ENCODE measurements at regions of chr2 and their contacts with region 1.

Region 1: DNA sequence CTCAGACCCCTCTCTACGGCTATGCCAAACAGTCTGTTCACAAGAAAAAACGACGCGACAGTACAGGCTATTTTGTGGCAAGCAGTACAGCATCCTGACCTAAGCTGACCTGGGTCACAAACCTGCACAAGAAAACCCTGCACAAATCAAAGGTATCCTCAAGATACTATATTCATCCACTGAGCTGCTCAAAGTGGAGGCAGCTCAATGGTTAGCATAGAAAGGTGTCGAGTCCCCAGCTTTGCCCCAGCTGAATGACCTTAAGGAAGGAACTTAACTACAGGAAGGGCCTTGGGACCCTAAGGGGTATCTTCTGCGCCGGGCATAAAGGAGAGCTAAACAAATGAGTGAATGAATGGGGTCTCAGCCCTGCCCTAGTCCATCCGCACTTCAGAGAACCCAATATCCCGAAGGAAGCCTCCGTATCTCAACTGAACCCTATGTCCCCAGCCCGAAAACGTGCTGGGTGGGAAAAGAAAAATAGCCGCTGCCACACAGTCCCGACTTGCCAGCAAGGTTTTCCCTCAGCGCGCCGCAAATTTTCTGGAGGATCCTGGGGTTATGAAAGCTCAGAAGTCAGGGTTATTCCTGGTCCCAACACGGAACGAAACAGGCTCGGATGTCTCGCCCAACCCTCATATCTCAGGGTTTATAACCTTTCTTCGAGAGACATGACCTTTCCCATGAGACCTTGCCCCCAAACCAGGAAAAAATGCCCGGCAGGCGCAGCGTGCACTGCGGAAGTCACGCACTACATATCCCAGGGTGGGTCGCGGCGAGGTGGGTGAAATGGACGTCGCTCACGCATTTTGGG is at the start of gene FASTKD1:
- DNase-seq: peak; percentile 95
- total RNA-seq, gene FASTKD1: 65.2 TPM

Region 2: DNA sequence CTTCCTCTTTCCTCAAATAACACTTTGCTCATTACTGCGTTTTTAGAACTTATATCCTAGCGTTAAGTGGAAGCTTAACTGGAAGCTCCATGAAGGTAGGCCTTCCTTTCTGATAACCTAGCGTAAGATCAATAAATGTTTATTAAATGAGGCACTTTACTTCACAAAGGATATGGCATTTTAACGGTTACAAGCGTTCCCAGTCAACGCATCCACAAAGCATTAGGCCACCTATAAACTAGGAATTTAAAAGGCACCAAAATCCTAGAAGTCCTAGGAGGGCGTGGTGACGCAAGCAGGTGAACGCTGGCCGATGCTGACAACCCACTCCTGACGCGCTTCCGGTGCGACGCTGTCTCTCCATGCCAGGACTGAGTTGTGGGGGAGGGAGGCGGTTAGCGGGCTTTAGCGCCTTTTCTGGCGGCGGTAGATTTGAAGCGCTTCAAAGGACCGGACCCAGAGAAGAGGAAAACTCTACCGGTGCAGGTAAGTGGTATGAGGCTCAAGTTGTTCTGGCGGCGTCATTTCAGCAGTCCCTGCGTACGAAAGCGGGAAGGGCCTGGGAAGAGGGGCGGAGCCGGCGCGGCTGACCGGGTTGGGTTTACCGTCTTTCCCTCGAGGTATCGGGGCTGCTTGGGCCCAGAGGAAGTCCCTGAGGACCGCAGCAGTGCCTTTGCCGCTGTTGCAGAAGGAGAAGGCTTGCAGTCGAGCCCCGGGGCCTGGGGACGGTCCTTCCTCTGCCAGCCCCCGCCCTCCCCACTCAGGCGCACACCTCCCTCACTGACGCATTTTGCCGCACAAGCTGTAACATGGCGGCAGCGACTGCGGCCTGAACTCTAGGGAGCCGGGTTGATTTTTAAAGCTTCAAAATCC is 10.9 kb after region 1 on chr2 and contains the start of gene PPIG:
- intact Hi-C with region 1: loop called (anchors 1 kb)
- DNase-seq: peak; percentile 96
- total RNA-seq, gene PPIG: 40.6 TPM

Region 3: GRCh38 chr2:169623235-169623634 is 49.9 kb after region 1 on chr2:
- intact Hi-C with region 1: no loop called
- DNase-seq: no peak

Region 4: GRCh38 chr2:169653636-169654035 is 80.3 kb after region 1 on chr2:
- intact Hi-C with region 1: no loop called
- DNase-seq: no peak

Region 5: GRCh38 chr2:169798718-169799592 is 225.6 kb after region 1 on chr2 and contains the start of gene SSB:
- intact Hi-C with region 1: loop called (anchors 1 kb)
- DNase-seq: peak; percentile 96
- total RNA-seq, gene SSB: 61.8 TPM

Measured in cardiac septum (tissue), 1 donor.